ENCODE measurements at regions of chr11 and their contacts with region 1.

Region 1: DNA sequence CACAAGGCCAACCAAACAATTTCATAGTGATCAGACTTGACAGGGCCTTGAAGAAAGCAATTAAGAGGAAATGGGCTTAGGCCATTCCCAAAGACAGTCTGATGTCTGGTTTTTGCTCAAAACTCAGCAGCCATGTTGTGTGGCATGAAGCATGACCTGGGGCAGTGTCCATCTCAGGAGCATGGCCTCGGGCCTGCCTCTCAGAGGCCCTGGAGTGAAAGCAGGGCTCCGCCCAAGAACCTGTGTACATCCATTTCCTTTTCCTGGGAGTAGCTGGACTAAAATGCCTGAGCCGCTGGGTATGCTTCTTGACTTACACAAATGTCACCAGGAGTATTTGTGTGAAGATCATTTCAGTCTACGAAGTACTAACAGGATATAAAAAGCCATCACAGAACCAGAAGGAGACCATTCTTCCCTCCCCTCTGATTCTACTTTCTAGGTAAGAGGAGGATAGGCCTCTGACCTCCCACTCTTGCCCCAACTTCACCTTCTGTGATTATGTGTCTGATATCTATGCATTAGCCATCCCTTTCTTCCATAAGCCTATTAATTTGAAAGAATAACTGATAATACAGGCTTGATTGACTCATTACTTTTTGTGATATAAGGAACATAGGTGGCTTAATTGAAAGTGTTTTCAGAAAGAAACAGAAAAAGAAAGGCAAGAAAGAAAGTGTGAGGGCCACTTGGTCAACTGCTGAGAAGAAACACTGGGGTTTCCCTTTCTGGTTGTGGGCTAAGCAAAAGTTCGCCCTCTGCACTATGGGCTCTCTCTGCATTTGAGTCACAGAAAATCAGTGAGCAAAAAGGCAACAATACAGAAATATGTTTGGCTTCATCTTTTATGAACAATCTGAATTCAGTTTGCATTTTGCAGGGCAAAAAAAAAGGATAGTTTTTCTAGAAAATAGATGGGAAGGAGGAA is 188.6 kb upstream of the MTMR2 start:
- DNase-seq: peak; percentile 57
- H3K4me3 Mint-ChIP-seq: no peak overlapping the region
- H3K27ac Mint-ChIP-seq: peak overlapping the region; percentile 5
- H3K4me1 Mint-ChIP-seq: peaks cover 45% of the 10 kb centered on the region
- H3K27me3 Mint-ChIP-seq: no peaks in the 10 kb centered on the region

Region 2: DNA sequence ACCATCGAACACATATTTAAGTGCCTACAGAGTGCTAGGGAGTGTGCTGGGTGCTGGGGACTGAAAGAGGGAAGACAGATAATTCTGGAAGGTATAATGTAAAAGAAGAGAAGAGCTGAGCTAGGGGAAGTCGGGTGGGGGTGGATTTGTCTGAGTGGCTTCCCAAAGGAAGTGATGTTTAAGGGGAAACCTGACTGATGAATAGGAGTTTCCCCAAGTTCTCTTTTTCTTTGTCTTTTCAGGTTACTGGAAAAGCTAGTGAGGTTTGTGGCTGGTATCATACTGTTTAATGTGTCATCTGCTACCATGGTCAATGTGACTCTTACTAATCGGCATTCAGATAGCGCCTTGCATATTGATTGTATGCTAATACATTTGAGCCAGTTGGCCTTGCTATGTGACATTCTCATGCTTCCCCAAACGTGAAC is 36.9 kb before region 1 on chr11:
- CTCF ChIA-PET with region 1: no interaction called
- POLR2A ChIA-PET with region 1: no interaction called
- intact Hi-C with region 1: loop called (anchors 2 kb)
- DNase-seq: peak; percentile 53
- H3K4me3 Mint-ChIP-seq: peak overlapping the region; percentile 44
- H3K27ac Mint-ChIP-seq: peak overlapping the region; percentile 85
- H3K4me1 Mint-ChIP-seq: peaks cover 80% of the 10 kb centered on the region
- H3K27me3 Mint-ChIP-seq: no peaks in the 10 kb centered on the region

Region 3: DNA sequence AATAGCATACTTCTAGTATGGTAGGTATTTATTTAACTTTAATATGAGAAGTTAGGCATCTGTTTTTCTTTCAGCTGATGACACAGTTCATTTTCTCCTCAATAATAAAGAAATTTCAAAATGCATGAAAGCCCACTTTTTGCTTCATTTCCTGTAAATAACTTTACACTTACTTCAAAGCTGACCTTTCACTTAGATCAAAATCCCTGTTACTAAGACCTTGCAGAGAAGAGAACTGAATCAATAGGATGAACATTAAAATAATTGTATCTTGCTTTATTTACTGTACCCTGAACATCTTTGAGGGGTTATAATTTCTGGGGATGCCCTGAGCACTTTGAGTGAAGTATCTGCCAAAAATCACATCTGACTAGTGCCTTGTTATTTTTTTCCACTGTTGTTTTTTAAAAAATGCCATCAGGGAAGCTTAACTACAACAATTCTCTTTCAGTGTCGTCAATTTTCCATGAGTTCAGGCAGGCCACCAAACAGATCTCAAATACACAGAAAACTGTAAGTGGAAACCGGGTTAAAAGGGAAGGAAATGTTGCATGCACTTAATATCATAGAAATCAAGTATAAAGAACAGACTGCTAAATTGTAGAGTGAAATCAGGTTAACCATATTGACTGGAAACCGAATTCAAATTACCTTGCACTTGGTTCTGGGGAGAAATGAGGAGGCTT is 24.3 kb after region 1 on chr11:
- CTCF ChIA-PET with region 1: no interaction called
- POLR2A ChIA-PET with region 1: no interaction called
- intact Hi-C with region 1: loop called (anchors 2 kb)
- DNase-seq: no peak
- H3K4me3 Mint-ChIP-seq: peak overlapping the region; percentile 22
- H3K27ac Mint-ChIP-seq: peak overlapping the region; percentile 89
- H3K4me1 Mint-ChIP-seq: peaks cover 74% of the 10 kb centered on the region
- H3K27me3 Mint-ChIP-seq: no peaks in the 10 kb centered on the region

Measured in activated CD4-positive, alpha-beta memory T cell treated with anti-CD3 and anti-CD28 coated beads for 36 hours (primary cell).